Activated naive CD4-positive, alpha-beta T cell treated with anti-CD3 and anti-CD28 coated beads, Interleukin-2, amount 10 ng/mL, durations not matched to agents 7 days and 5 days (primary cell): ENCODE measurements at regions of chrX and their contacts with region 1.

Region 1: GRCh38 chrX:107672955-107673378 is 44.7 kb downstream of the PRPS1 start:
- DNase-seq: peak; percentile 86
- H3K4me3 Mint-ChIP-seq: peak overlapping the region; percentile 66
- H3K27ac Mint-ChIP-seq: peak overlapping the region; percentile 99
- H3K4me1 Mint-ChIP-seq: peaks cover 64% of the 10 kb centered on the region
- H3K27me3 Mint-ChIP-seq: no peaks in the 10 kb centered on the region

Region 2: DNA sequence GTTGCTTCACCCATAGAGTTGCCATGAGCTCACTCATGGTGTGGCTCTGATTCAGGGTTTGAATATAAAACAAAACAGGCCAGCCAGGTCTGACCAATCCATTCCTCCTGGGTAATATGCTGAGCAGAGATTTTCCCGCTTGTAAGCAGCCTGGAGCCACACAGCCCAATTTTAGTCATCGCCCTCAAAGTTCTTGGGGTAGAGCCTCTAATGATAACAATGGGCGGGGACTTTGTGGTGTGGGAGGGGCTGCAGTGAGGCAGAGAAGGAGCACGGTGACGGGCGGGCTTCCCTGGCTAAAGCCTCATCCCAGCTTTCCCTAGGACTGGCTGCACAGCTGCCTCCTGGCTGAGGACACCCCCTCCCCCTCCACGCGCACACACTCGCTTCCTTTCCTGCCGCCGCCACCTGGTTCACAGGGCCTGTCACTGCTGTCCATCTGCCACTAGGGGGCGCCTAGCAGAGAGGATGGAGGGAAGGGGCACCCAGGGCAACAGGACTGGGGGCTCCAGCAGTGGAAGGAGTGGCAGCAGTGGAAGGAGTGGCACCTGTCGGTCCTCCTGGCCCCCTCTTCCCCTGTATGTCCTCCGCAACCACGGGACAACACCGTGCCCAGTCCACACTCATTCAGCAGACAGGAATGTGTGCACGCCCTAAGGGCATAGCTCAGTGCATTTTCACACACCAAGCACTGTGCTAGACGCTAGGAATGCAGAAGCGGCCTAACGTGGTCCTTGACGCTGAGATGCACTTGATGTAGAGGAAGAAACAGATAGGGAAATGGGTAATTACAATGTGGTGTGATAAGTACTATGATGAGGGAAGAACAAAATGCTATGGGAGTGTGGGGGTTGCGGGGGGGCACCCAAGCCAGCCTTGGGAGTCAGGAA is 17.9 kb before region 1 on chrX:
- CTCF ChIA-PET with region 1: interaction called, 13 read pairs
- DNase-seq: peak; percentile 74
- H3K4me3 Mint-ChIP-seq: peak overlapping the region; percentile 2
- H3K27ac Mint-ChIP-seq: no peak overlapping the region
- H3K4me1 Mint-ChIP-seq: peaks cover 11% of the 10 kb centered on the region
- H3K27me3 Mint-ChIP-seq: no peaks in the 10 kb centered on the region

Region 3: DNA sequence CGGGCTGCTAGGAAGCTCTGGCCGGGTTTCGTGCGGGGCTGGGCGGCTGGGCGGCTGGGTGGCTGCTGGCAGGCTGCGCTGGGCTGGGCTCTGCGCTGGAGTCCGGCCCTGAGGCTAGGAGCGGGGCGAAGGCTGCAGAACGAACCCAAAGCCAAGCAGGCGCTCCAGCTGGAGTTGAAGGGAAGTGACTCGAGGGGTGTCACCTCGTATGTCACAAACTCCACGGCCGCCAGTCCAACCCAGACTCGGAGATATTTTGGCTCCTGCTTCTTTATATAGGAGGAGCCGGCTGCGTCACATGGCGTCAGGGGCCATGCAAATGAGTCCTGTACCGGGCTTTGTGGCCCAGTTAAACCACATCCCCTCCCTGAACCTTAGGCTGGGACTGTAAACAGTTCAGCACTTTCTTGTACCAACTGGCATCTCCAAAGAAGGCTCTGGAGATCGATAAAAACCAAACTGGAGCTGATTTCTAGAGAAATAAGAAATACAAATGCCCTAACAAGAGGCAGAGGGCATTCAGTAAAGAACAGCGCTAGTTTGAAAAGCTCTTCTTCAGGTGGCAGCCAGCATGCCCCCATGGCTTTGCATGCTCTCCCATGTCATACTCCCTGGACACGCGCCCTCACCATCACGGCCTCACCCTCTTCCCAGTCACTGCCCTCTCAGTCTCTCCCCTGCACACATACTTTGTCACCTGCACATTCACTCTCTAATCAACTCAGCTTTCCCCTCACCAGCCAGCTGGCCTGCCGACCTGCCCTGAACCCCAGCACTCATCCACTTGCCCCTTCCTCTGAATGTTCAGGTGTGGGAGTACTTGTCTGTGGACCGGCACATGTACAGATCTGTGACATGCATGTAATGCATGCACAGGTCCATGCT is 44.1 kb after region 1 on chrX:
- CTCF ChIA-PET with region 1: interaction called, 278 read pairs
- DNase-seq: peak; percentile 92
- H3K4me3 Mint-ChIP-seq: peak overlapping the region; percentile 92
- H3K27ac Mint-ChIP-seq: peak overlapping the region; percentile 96
- H3K4me1 Mint-ChIP-seq: peaks cover 56% of the 10 kb centered on the region
- H3K27me3 Mint-ChIP-seq: peaks cover 12% of the 10 kb centered on the region

Region 4: GRCh38 chrX:107741404-107741790 is 68.4 kb after region 1 on chrX:
- CTCF ChIA-PET with region 1: interaction called, 13 read pairs
- DNase-seq: no peak
- H3K4me3 Mint-ChIP-seq: peak overlapping the region; percentile 71
- H3K27ac Mint-ChIP-seq: peak overlapping the region; percentile 95
- H3K4me1 Mint-ChIP-seq: peaks cover 32% of the 10 kb centered on the region
- H3K27me3 Mint-ChIP-seq: peaks cover 5% of the 10 kb centered on the region

Region 5: GRCh38 chrX:107776649-107777535 is 103.9 kb after region 1 on chrX:
- CTCF ChIA-PET with region 1: interaction called, 77 read pairs
- DNase-seq: peak; percentile 81
- H3K4me3 Mint-ChIP-seq: peak overlapping the region; percentile 81
- H3K27ac Mint-ChIP-seq: no peak overlapping the region
- H3K4me1 Mint-ChIP-seq: peaks cover 11% of the 10 kb centered on the region
- H3K27me3 Mint-ChIP-seq: peaks cover 35% of the 10 kb centered on the region